ENCODE measurements at regions of chr7 and their contacts with region 1.

Region 1: DNA sequence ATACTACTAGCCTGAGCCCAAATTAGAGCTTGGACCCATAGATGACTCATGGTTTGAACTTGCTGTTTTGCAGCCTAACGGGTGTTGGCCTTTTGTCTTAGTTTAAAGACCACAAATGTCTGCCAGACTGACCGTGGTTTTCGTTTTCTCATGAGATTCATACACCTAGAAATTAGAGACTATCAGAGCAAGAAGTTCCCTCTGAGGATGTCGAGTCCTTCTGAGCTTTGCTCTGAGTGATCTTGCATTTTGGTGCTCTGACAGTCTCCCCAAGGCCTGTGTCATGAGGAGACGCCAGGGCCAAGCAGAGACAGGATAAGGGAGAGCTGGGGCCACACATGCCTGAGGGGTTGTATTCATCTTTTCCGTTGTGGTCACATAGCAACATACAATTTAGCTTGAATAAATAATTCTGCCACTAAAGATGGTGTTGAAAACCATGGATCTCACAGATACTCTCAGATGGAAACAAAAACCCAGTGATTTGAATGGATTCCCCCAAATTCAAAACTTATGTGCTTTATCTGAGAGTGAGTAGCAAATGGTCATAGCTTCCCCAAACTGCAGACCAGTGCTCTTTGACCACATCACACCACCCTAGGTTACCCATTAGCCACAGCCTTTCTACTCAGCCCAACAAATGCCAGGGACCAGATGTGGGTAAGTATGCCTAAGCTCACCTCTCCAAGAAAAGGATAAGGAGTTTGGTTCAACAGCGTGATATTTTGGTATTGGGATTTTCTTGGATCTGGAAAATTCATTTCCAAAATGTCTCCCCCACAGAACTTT is 762.0 kb upstream of the IGFBP3 start:
- DNase-seq: no peak
- ATAC-seq: no peak
- H3K4me3 ChIP-seq: no peak overlapping the region
- H3K27ac ChIP-seq: no peak overlapping the region
- H3K4me1 ChIP-seq: no peaks in the 10 kb centered on the region
- H3K27me3 ChIP-seq: no peaks in the 10 kb centered on the region
- CTCF ChIP-seq: no peak

Region 2: GRCh38 chr7:46257766-46258448 is 425.1 kb before region 1 on chr7:
- intact Hi-C with region 1: no loop called
- DNase-seq: no peak
- ATAC-seq: no peak
- H3K4me3 ChIP-seq: no peak overlapping the region
- H3K27ac ChIP-seq: no peak overlapping the region
- H3K4me1 ChIP-seq: no peaks in the 10 kb centered on the region
- H3K27me3 ChIP-seq: no peaks in the 10 kb centered on the region
- CTCF ChIP-seq: no peak

Region 3: DNA sequence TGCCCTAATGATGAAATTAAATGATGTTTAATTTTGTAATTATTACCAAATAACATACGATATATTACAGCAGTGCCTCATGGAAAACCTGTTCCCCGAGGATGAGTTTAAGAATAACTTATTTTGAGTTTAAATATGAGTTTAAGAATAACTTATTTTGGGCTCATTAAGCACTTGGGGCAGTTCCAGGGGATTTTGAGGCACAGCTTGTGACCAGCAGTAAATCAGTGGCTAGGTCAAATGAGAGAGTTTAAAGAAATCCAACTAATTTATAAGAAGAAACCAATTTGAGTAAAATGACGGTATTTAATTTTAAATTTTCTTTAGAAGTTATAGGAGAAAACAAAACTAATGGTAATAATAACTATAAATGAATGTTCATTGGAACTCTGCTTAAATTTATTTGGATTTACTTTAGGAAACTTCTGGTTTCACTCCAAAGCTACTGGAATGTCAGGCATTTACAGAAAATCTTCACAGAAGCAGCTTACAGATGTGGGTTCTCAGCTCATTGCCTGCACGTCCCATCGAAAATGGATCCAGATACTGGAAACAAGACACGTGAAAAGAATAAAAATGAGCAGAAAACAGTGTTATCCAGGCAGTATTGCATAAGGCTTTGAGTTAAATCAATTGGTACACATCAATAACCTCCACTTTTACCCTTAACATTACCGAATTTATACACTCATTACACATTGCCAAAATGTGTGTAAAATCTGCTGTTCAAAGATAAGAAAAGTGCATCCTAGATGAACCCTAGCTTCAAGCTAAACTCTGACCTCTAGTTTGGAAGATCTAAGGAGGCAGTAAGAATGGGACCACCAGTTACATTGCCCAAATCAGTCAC is 22.6 kb after region 1 on chr7:
- intact Hi-C with region 1: no loop called
- DNase-seq: no peak
- ATAC-seq: peak in 1 of 4 donors; percentile 23
- H3K4me3 ChIP-seq: no peak overlapping the region
- H3K27ac ChIP-seq: no peak overlapping the region
- H3K4me1 ChIP-seq: peaks cover under 1 to 5% (median 4%) of the 10 kb centered on the region in 3 donors
- H3K27me3 ChIP-seq: no peaks in the 10 kb centered on the region
- CTCF ChIP-seq: no peak

Region 4: DNA sequence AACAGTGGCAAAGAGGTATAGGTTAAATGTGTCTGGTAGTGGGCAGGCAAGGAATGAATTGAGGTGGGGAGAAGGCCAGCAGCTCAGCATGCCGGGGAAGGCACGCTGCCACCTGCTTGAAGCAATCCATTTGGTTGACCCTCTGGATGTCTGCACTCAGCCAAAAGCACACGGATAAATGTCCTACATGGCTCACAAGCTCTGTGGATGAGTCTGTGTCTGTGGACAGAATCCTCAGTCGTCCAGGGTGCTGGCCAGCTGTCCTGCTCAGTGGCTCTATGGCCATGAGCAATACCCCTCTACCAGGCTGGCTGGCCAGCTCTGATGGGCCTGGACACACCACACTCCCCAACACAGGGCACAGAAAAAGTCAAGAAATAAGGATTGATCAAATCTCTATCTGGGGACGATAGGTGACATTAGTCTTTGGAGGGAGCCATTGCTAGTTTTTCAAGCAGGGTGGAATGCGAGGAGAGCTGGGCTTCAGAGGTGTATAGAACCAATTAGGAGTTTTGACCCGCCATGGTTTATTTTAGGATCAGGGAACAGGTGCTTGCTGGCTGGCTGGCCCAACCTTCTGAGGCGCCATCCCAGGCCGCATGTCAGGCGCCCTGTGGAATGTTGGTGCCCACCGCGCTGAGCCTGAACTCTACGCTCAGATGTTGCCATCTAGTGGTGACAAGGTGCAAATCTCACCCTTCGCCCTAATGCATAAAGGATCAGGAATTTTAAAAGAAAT is 405.5 kb after region 1 on chr7:
- intact Hi-C with region 1: loop called in 1 of 3 experiments (anchors 10 kb)
- DNase-seq: peak in 4 of 6 donors; percentile 37 to 61 (median 49)
- ATAC-seq: peak; percentile 83 to 99 (median 95)
- H3K4me3 ChIP-seq: no peak overlapping the region
- H3K27ac ChIP-seq: no peak overlapping the region
- H3K4me1 ChIP-seq: no peaks in the 10 kb centered on the region
- H3K27me3 ChIP-seq: no peaks in the 10 kb centered on the region
- CTCF ChIP-seq: peak; percentile 64 to 85 (median 72)